Calu3 (cell line): ENCODE measurements at regions of chr15 and their contacts with region 1.

Region 1: GRCh38 chr15:85800467-85801123 is 5.9 kb upstream of the KLHL25 start:
- DNase-seq: peak; percentile 90
- H3K4me3 Mint-ChIP-seq: peak overlapping the region; percentile 30
- H3K27ac Mint-ChIP-seq: peak overlapping the region; percentile 21
- H3K4me1 Mint-ChIP-seq: peaks cover 23% of the 10 kb centered on the region
- H3K27me3 Mint-ChIP-seq: no peaks in the 10 kb centered on the region
- CTCF ChIP-seq: no peak

Region 2: DNA sequence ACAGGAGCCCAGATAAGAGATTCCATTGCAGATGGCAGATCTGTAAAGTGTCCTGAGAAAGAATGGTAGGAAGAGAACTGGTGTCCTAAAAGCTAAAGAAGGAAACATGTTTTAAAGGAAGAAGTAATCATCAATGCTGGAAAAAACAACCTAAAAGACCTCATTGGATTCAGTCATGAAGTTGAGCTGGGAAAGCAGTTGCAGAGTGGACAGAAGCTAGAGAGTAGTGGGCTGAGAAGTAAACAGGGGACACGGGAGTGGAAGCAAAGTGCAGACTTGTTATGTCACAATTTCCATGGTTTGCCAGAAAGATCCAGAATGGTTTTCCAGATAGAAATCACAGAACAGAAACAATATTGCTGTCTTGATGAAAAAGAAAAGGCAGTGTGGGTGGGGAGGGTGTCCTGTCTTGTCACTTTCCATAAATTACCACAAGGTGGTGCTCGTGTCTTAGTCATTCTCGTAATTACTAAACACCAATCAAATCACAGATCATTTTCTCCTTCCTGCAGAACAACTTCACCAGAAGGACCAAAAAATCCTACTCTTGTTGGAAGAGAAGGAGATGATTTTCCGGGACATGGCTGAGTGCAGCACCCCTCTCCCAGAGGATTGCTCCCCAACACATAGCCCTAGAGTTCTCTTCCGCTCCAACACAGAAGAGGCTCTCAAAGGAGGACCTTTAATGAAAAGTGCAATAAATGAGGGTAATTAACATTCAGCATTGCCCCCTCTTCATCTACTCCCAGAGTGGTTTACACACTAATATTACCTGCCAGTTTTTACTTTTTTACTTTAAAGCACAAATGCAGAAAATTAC is 70.4 kb before region 1 on chr15:
- CTCF ChIA-PET with region 1: no interaction called
- intact Hi-C with region 1: loop called (anchors 2 kb)
- DNase-seq: peak; percentile 64
- H3K4me3 Mint-ChIP-seq: no peak overlapping the region
- H3K27ac Mint-ChIP-seq: no peak overlapping the region
- H3K4me1 Mint-ChIP-seq: no peaks in the 10 kb centered on the region
- H3K27me3 Mint-ChIP-seq: no peaks in the 10 kb centered on the region
- CTCF ChIP-seq: peak; percentile 70

Region 3: GRCh38 chr15:85831415-85832113 is 31.0 kb after region 1 on chr15:
- CTCF ChIA-PET with region 1: interaction called, 11 read pairs
- intact Hi-C with region 1: loop called (anchors 1 kb)
- DNase-seq: peak; percentile 68
- H3K4me3 Mint-ChIP-seq: no peak overlapping the region
- H3K27ac Mint-ChIP-seq: no peak overlapping the region
- H3K4me1 Mint-ChIP-seq: no peaks in the 10 kb centered on the region
- H3K27me3 Mint-ChIP-seq: no peaks in the 10 kb centered on the region
- CTCF ChIP-seq: peak; percentile 69

Region 4: GRCh38 chr15:85840065-85840801 is 39.6 kb after region 1 on chr15:
- CTCF ChIA-PET with region 1: interaction called, 26 read pairs
- intact Hi-C with region 1: loop called (anchors 1 kb)
- DNase-seq: peak; percentile 98
- H3K4me3 Mint-ChIP-seq: peak overlapping the region; percentile 57
- H3K27ac Mint-ChIP-seq: no peak overlapping the region
- H3K4me1 Mint-ChIP-seq: peaks cover 31% of the 10 kb centered on the region
- H3K27me3 Mint-ChIP-seq: peaks cover 20% of the 10 kb centered on the region
- CTCF ChIP-seq: peak; percentile 88

Region 5: DNA sequence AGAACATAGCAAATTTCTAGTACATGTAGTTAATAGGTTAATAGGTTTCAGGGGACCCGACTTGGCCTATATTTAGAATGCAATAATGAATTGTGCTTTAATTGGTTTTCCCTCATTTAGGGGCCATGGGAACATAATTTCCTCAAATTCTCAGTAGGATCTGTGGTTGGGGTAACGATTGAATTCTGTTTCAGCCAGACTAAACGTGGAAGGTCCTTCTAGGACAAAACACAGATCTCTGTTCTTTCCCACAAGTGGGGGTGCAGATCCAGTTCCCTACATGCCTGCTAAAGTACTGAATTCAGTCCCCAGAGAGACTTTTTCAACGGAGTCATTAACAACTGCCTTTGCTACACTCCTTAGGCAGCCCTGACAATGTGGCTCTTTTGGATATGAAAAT is 228.4 kb after region 1 on chr15:
- CTCF ChIA-PET with region 1: no interaction called
- intact Hi-C with region 1: no loop called
- DNase-seq: no peak
- H3K4me3 Mint-ChIP-seq: no peak overlapping the region
- H3K27ac Mint-ChIP-seq: no peak overlapping the region
- H3K4me1 Mint-ChIP-seq: no peaks in the 10 kb centered on the region
- H3K27me3 Mint-ChIP-seq: no peaks in the 10 kb centered on the region
- CTCF ChIP-seq: no peak